Left ventricle myocardium inferior (tissue), 1 donor: ENCODE measurements at regions of chr14 and their contacts with region 1.

Region 1: DNA sequence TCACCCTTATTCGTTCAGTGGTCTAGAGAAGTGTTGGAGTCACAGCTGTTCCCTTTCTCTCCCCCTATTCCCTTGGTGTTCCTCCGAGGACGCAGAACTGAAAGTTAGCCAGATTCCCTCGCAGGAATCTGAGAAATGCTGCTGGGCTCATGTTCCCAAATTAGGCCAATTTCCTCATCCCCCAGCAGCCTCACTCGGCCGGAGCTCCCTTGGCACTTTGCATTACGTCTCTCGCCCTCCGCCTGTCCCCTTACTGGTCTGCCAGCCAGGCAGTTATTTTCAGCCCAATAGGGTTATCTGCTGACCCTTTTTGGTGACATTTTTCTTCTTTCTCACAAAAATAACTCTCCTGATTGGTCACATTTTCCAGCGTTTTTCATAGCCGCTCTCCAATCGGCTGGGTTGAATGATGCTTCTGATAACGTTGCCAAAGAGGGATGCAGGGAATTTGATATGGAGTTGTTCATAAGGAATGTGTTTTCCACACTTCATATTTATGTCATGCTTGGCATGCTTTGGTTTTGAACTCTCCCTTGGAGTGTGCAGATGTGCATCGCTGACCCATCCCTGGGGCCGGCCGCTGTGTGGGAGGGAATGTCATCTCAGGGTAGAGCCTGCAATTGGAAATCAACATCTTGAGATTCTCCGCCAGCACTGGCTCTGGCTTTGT is 9.9 kb downstream of the IFT43 start:
- DNase-seq: peak; percentile 62
- H3K4me3 ChIP-seq: peak overlapping the region; percentile 43
- H3K27ac ChIP-seq: peak overlapping the region; percentile 72
- H3K4me1 ChIP-seq: peaks cover 53% of the 10 kb centered on the region
- H3K27me3 ChIP-seq: no peaks in the 10 kb centered on the region
- CTCF ChIP-seq: no peak

Region 2: GRCh38 chr14:75510547-75510946 is 485.0 kb before region 1 on chr14:
- intact Hi-C with region 1: no loop called
- DNase-seq: no peak
- H3K4me3 ChIP-seq: no peak overlapping the region
- H3K27ac ChIP-seq: no peak overlapping the region
- H3K4me1 ChIP-seq: no peaks in the 10 kb centered on the region
- H3K27me3 ChIP-seq: peaks cover 14% of the 10 kb centered on the region
- CTCF ChIP-seq: no peak

Region 3: DNA sequence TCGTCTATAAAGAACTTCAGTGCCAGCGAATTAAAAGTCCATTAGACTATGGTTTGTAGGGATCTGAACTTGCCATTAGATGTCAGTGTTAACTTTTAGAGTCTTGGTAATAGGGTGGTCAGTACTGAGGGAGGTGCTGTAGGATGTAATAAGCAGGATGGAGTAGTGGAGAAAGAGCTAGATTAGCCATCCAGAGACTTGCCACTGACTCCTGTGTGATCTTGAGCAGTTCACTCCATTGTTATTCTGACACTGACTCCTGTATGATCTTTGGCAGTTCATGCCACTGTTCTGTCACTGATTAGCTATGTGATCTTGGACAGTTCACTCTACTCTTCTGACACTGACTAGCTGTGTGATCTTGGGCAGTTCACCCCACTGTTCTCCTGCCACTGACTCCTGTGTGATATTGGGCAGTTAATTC is 200.9 kb before region 1 on chr14:
- intact Hi-C with region 1: loop called (anchors 10 kb)
- DNase-seq: no peak
- H3K4me3 ChIP-seq: no peak overlapping the region
- H3K27ac ChIP-seq: peak overlapping the region; percentile 31
- H3K4me1 ChIP-seq: peaks cover 6% of the 10 kb centered on the region
- H3K27me3 ChIP-seq: no peaks in the 10 kb centered on the region
- CTCF ChIP-seq: peak; percentile 61

Region 4: GRCh38 chr14:76109087-76109880 is 113.8 kb after region 1 on chr14:
- intact Hi-C with region 1: no loop called
- DNase-seq: no peak
- H3K4me3 ChIP-seq: no peak overlapping the region
- H3K27ac ChIP-seq: no peak overlapping the region
- H3K4me1 ChIP-seq: no peaks in the 10 kb centered on the region
- H3K27me3 ChIP-seq: peaks cover 38% of the 10 kb centered on the region
- CTCF ChIP-seq: no peak